ENCODE measurements at regions of chr4 and their contacts with region 1.

Region 1: GRCh38 chr4:86706923-86707597 is 112.9 kb downstream of the PTPN13 start:
- DNase-seq: no peak
- ATAC-seq: peak; percentile 27; the same call in 1 of the 3 replicates
- H3K4me3 ChIP-seq: no peak overlapping the region
- H3K27ac ChIP-seq: no peak overlapping the region
- H3K4me1 ChIP-seq: no peaks in the 10 kb centered on the region
- H3K27me3 ChIP-seq: no peaks in the 10 kb centered on the region
- CTCF ChIP-seq: no peak
- EP300 ChIP-seq: no peak
- POLR2A ChIP-seq: no peak
- RAD21 ChIP-seq: no peak

Region 2: DNA sequence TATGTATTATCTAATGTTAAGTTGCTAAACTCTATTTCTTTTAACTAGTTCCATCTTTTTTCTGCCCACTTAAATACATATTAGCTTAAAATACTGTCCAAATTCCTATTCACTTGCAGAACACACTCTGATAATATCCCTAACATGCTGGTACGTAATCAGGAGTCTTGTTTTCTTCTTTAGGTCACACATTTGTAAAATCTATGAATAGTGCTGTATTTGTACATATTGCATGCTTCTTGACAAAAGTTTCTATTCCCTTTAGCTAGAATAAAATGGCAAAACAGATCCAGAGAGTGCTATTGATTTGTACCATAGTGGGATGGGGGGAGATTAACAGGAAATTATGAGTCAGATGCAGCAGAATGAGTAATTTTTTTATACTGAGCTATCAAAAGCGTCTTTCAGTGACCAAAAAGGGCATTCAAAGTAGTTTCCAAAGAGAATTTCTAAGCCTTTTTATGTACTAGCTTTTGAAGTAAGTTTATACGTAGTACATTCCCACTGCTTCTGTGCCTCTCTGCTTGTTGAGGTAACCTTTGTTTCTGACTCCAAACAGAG is 13.5 kb after region 1 on chr4:
- CTCF ChIA-PET with region 1: interaction called, 5 read pairs
- POLR2A ChIA-PET with region 1: interaction called, 4 read pairs
- RAD21 ChIA-PET with region 1: interaction called, 3 read pairs
- SMC1A ChIA-PET with region 1: interaction called, 11 read pairs
- in situ Hi-C with region 1: no loop called
- intact Hi-C with region 1: no loop called
- DNase-seq: no peak
- ATAC-seq: no peak
- H3K4me3 ChIP-seq: no peak overlapping the region
- H3K27ac ChIP-seq: no peak overlapping the region
- H3K4me1 ChIP-seq: no peaks in the 10 kb centered on the region
- H3K27me3 ChIP-seq: no peaks in the 10 kb centered on the region
- CTCF ChIP-seq: no peak
- EP300 ChIP-seq: no peak
- POLR2A ChIP-seq: no peak
- RAD21 ChIP-seq: no peak

Region 3: GRCh38 chr4:86878640-86879039 is 171.6 kb after region 1 on chr4:
- CTCF ChIA-PET with region 1: no interaction called
- POLR2A ChIA-PET with region 1: no interaction called
- RAD21 ChIA-PET with region 1: no interaction called
- SMC1A ChIA-PET with region 1: no interaction called
- in situ Hi-C with region 1: no loop called
- intact Hi-C with region 1: no loop called
- DNase-seq: no peak
- ATAC-seq: no peak
- H3K4me3 ChIP-seq: no peak overlapping the region
- H3K27ac ChIP-seq: no peak overlapping the region
- H3K4me1 ChIP-seq: no peaks in the 10 kb centered on the region
- H3K27me3 ChIP-seq: no peaks in the 10 kb centered on the region
- CTCF ChIP-seq: 0 out of 6 replicates have a peak, but pooled peaks of 1 of the 3 experiments have one; percentile 2
- EP300 ChIP-seq: no peak
- POLR2A ChIP-seq: no peak
- RAD21 ChIP-seq: no peak